ENCODE measurements at regions of chr18 and their contacts with region 1.

Region 1: DNA sequence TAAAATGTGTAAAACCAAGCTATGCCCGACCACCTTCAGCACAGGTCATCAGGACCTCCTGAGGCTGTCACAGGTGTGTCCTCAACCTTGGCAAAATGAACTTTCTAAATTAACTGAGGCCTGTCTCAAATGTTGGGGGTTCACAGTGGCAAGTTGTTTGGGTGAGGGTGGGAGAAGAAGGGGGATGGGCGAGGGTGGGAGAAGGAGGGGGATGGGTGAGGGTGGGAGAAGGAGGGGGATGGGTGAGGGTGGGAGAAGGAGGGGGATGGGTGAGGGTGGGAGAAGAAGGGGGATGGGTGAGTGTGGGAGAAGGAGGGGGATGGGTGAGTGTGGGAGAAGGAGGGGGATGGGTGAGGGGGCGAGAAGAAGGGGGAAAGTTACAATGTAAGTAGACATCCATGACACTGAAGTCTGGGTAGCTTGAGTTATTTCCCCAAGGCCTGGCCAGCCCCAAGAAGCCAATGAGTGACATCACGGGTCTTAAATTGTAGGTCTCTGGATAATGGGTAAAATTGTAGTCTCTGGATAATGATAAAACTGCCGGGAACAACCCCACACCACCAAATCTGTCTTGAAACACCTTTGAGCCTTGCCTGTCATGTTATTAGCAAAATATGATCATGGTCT is 56.3 kb downstream of the TIMM21 start:
- DNase-seq: no peak
- H3K4me3 ChIP-seq: no peak overlapping the region
- H3K27ac ChIP-seq: no peak overlapping the region
- H3K4me1 ChIP-seq: no peaks in the 10 kb centered on the region
- H3K27me3 ChIP-seq: no peaks in the 10 kb centered on the region
- CTCF ChIP-seq: no peak
- POLR2A ChIP-seq: no peak

Region 2: GRCh38 chr18:74551936-74552555 is 347.4 kb after region 1 on chr18:
- intact Hi-C with region 1: loop called (anchors 5 kb)
- DNase-seq: peak; percentile 6
- H3K4me3 ChIP-seq: no peak overlapping the region
- H3K27ac ChIP-seq: no peak overlapping the region
- H3K4me1 ChIP-seq: peaks cover 0 to 2% (median 0%) of the 10 kb centered on the region in 3 donors
- H3K27me3 ChIP-seq: peaks cover 0 to 13% (median 0%) of the 10 kb centered on the region in 4 donors
- CTCF ChIP-seq: peak; percentile 70 to 79 (median 75)
- POLR2A ChIP-seq: no peak

Measured in esophagus squamous epithelium (tissue), 5 donors.